PC-9 (cell line): ENCODE measurements at regions of chr12 and their contacts with region 1.

Region 1: GRCh38 chr12:89709157-89709994 is 738 bp upstream of the ATP2B1 start:
- DNase-seq: peak; percentile 92 to 94
- H3K4me3 ChIP-seq: peak overlapping the region; percentile 93
- H3K27ac ChIP-seq: peak overlapping the region; percentile 80
- H3K4me1 ChIP-seq: peaks cover 35% of the 10 kb centered on the region
- H3K27me3 ChIP-seq: no peaks in the 10 kb centered on the region
- CTCF ChIP-seq: no peak

Region 2: DNA sequence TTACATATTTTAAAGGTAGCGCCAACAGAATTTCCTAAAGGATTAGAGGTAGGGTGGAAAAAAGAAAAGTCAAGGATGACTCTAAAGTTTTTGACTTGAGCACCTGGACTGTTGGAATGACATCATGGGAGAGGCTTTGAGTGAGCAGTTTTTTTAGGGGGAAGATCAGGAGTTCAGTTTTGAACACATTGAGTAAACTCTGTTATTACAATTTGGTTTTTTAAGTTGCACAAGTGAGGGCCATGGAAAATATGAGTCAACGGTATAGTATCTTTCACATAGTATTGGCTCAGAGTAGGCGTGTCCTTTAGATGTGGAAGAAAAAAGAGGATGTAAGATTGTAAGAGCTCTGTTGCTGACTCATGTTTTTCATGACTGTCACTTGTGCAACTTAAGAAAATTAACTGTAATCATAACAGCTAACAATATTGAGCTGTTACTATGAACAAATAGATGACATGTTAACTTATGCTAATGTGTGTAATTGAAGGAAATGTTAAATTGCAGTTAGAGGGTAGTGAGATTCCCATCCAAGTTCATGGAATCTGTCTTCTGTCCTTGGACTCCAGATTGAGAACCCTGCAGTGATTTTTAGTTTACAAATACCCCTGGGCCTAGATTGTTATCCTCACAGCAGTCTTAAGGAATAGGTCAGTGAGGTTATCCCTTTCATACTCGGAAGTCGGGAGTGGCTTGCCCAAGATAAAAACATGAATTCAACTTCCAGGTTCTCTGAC is 47.4 kb after region 1 on chr12:
- CTCF ChIA-PET with region 1: no interaction called
- POLR2A ChIA-PET with region 1: no interaction called
- intact Hi-C with region 1: loop called (anchors 1 kb)
- DNase-seq: peak; percentile 29 to 98
- H3K4me3 ChIP-seq: peak overlapping the region; percentile 22; the same call in 1 of the 2 replicates
- H3K27ac ChIP-seq: peak overlapping the region; percentile 98
- H3K4me1 ChIP-seq: peaks cover 40% of the 10 kb centered on the region
- H3K27me3 ChIP-seq: no peaks in the 10 kb centered on the region
- CTCF ChIP-seq: no peak

Region 3: GRCh38 chr12:89975574-89975973 is 266.2 kb after region 1 on chr12:
- CTCF ChIA-PET with region 1: no interaction called
- POLR2A ChIA-PET with region 1: no interaction called
- intact Hi-C with region 1: loop called (anchors 2 kb)
- DNase-seq: no peak
- H3K4me3 ChIP-seq: no peak overlapping the region
- H3K27ac ChIP-seq: no peak overlapping the region
- H3K4me1 ChIP-seq: peaks cover 10% of the 10 kb centered on the region
- H3K27me3 ChIP-seq: no peaks in the 10 kb centered on the region
- CTCF ChIP-seq: no peak

Region 4: DNA sequence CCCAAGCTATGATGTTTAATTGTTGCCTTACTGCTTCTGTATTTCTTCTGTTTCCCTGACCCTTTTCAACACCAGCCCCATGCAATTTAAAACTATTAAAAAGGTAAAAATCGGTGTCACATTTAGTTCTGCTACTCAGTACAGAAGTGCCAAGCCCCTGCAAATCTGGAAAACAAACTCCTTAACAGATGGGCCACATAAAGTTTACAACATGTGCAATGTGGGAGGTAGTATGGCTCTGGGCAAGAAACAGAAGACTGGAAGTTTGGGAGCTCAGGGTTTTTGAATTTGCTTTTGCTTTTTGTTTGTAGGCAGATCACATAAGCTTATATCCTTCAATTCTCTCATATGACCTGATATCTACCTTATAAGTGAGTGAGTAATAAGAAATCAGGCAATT is 403.3 kb after region 1 on chr12:
- CTCF ChIA-PET with region 1: no interaction called
- POLR2A ChIA-PET with region 1: no interaction called
- intact Hi-C with region 1: no loop called
- DNase-seq: no peak
- H3K4me3 ChIP-seq: no peak overlapping the region
- H3K27ac ChIP-seq: no peak overlapping the region
- H3K4me1 ChIP-seq: no peaks in the 10 kb centered on the region
- H3K27me3 ChIP-seq: no peaks in the 10 kb centered on the region
- CTCF ChIP-seq: no peak

Region 5: GRCh38 chr12:90149453-90149852 is 440.1 kb after region 1 on chr12:
- CTCF ChIA-PET with region 1: interaction called, 16 read pairs
- POLR2A ChIA-PET with region 1: no interaction called
- intact Hi-C with region 1: no loop called
- DNase-seq: no peak
- H3K4me3 ChIP-seq: no peak overlapping the region
- H3K27ac ChIP-seq: no peak overlapping the region
- H3K4me1 ChIP-seq: no peaks in the 10 kb centered on the region
- H3K27me3 ChIP-seq: no peaks in the 10 kb centered on the region
- CTCF ChIP-seq: no peak

Region 6: DNA sequence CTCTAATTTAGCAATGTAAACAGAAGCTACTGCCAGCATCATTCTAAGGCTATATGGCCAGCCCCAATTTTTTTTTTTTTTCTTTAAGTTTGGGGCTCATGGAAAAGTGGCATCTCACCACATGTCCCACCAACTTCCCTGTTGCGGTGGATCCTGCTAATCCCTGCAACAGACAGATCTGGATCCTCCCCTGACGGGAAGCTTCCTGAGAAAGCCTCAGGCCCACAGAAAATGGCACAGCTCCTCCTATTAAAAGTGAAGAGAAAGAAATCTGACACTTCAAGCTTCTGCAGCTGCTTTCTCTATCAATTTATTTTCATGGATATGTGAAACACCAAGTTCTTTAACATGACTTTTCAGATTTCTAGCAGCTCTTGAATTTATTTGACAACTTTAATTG is 1907.0 kb after region 1 on chr12:
- CTCF ChIA-PET with region 1: no interaction called
- POLR2A ChIA-PET with region 1: no interaction called
- intact Hi-C with region 1: no loop called
- DNase-seq: peak in 1 of 2 experiments; percentile 1
- H3K4me3 ChIP-seq: no peak overlapping the region
- H3K27ac ChIP-seq: no peak overlapping the region
- H3K4me1 ChIP-seq: peaks cover 19% of the 10 kb centered on the region
- H3K27me3 ChIP-seq: no peaks in the 10 kb centered on the region
- CTCF ChIP-seq: no peak